IMR-90 (cell line): ENCODE measurements at regions of chr14 and their contacts with region 1.

Region 1: DNA sequence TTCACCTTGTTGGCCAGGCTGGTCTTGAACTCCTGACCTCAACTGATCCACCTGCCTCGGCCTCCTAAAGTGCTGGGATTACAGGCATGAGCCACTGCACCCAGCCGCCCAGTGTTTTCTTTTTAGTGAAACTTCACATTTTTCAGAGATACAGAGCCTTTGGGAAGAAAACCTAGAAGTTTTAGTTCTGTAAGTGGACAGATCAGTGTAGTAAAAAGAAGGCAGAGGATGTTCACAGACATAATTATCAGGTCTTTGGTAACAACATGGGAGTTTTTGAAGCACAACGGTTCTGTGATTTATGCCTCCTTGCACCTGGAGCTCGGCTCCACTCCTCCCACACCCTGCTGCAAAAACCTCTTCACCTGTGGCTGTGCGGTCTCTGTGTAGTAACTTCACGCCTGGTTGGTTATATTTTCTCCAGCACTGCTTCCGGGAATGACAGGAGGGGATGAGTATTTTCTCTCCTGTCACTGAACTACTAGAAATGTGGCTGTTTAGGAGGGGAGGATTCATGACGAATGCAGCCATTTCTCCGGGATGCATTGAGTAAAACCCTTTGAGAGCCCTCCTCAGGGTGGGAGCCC is 67.0 kb downstream of the ARF6 start:
- DNase-seq: no peak
- ATAC-seq: no peak
- H3K4me3 ChIP-seq: no peak overlapping the region
- H3K27ac ChIP-seq: no peak overlapping the region
- H3K4me1 ChIP-seq: peaks cover 11% of the 10 kb centered on the region
- H3K27me3 ChIP-seq: no peaks in the 10 kb centered on the region
- CTCF ChIP-seq: no peak
- POLR2A ChIP-seq: no peak
- RAD21 ChIP-seq: no peak

Region 2: GRCh38 chr14:47978871-47979270 is 1981.0 kb before region 1 on chr14:
- CTCF ChIA-PET with region 1: no interaction called
- POLR2A ChIA-PET with region 1: no interaction called
- dilution Hi-C with region 1: no loop called
- in situ Hi-C with region 1: no loop called
- intact Hi-C with region 1: no loop called
- DNase-seq: no peak
- ATAC-seq: no peak
- H3K4me3 ChIP-seq: no peak overlapping the region
- H3K27ac ChIP-seq: no peak overlapping the region
- H3K4me1 ChIP-seq: no peaks in the 10 kb centered on the region
- H3K27me3 ChIP-seq: no peaks in the 10 kb centered on the region
- CTCF ChIP-seq: no peak
- POLR2A ChIP-seq: no peak
- RAD21 ChIP-seq: no peak

Region 3: DNA sequence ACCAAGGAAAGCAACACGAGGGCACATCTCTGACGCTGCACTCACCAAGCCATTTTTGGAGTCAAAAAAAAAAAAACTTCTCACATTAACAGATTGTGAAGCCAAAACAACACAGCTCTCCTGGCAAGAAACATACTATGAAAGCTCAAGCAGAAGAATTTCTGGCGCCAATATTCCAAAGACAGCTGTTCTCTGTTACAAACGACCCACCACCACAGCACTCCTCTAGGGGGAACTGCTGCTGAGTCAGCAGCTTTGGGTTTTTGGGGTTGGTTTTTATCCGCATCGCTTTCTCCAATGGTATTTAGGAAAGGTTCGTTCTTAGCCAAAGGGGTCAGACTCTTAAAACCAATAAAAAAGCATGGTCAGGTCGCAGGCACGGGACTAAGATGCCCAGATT is 753.1 kb before region 1 on chr14:
- CTCF ChIA-PET with region 1: no interaction called
- POLR2A ChIA-PET with region 1: no interaction called
- dilution Hi-C with region 1: no loop called
- in situ Hi-C with region 1: no loop called
- intact Hi-C with region 1: no loop called
- DNase-seq: no peak
- ATAC-seq: no peak
- H3K4me3 ChIP-seq: no peak overlapping the region
- H3K27ac ChIP-seq: no peak overlapping the region
- H3K4me1 ChIP-seq: no peaks in the 10 kb centered on the region
- H3K27me3 ChIP-seq: no peaks in the 10 kb centered on the region
- CTCF ChIP-seq: no peak
- POLR2A ChIP-seq: no peak
- RAD21 ChIP-seq: no peak

Region 4: DNA sequence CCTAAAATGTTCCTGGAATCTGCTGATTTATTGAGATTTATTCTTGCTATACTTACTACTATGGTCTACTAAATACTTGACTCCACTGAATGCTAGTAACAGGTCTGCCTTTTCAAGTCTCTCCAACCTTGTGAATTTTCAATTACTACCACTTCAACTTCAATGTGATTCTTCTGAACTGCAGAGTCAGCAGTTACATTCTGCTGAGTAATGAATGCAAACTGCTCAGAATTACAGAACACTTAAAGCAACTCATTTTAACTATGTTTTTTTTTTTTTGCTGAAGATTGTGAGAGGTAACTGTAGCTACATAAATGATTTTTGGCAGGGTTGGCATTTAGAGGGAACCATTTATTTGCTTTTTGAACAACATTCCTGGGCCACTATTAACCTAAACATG is 25.3 kb before region 1 on chr14:
- CTCF ChIA-PET with region 1: no interaction called
- POLR2A ChIA-PET with region 1: interaction called, 17 read pairs
- dilution Hi-C with region 1: no loop called
- in situ Hi-C with region 1: no loop called
- intact Hi-C with region 1: no loop called
- DNase-seq: peak; percentile 19
- ATAC-seq: peak; percentile 27; the same call in 1 of the 2 replicates
- H3K4me3 ChIP-seq: no peak overlapping the region
- H3K27ac ChIP-seq: no peak overlapping the region
- H3K4me1 ChIP-seq: peaks cover 3% of the 10 kb centered on the region; the same call in 1 of the 2 replicates
- H3K27me3 ChIP-seq: no peaks in the 10 kb centered on the region
- CTCF ChIP-seq: no peak
- POLR2A ChIP-seq: no peak
- RAD21 ChIP-seq: no peak